ENCODE measurements at regions of chr9 and their contacts with region 1.

Region 1: GRCh38 chr9:129737479-129738274 is 15.2 kb downstream of the PTGES start:
- DNase-seq: peak; percentile 56 to 92 (median 81)
- ATAC-seq: peak; percentile 88 to 91 (median 89)
- H3K4me3 ChIP-seq: peak overlapping the region; percentile 64 to 84
- H3K4me3 Mint-ChIP-seq: peak overlapping the region; percentile 67 to 77 (median 68)
- H3K27ac ChIP-seq: peak overlapping the region; percentile 61
- H3K27ac Mint-ChIP-seq: peak overlapping the region; percentile 39 to 64
- H3K4me1 ChIP-seq: peaks cover 0 to 18% of the 10 kb centered on the region in 2 experiments
- H3K4me1 Mint-ChIP-seq: peaks cover 0 to 7% (median 4%) of the 10 kb centered on the region in 3 donors
- H3K27me3 ChIP-seq: peaks cover 0 to 27% of the 10 kb centered on the region in 2 experiments
- H3K27me3 Mint-ChIP-seq: peaks cover 0 to 2% of the 10 kb centered on the region in 2 donors

Region 2: DNA sequence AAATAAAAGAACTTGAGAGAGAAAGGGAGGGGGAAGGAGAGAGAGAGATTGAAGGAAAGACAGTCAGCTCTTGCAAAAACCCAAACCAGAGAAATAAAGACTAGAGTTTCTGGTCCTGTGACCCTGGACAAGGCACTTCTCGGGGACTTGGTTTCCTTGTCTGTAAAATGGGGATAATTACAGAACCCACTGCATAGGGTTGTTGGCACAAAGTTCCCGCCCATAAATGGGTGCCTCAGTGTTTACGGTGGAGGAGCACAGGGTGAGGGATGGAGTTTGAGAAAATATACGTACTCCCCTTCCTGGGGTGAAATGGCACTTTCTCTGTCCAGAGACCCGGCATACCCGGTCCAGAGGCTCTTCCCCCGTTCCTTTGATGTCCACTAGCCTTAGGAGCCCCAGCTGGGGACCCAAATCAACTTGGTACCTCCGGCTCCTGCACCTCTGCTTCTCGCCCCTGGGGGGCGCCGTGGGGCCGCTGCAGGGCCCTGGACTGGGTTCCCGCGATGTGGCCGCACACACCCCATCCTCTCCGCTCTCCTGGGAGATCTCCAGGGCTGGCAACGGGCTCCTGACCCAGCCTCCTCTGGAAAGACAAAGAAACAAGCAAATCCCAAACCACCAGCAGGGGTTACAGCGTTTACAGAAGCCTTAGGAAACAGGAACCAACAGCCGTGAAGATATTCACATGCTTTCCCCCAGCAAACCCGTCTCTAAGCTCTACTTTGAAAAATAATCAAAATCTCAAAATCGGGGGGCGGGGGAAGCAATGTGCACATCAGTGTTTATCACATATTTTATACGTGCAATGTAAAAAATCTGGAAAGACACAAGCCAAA is 11.1 kb before region 1 on chr9:
- CTCF ChIA-PET with region 1: interaction called, 3 to 10 read pairs
- POLR2A ChIA-PET with region 1: no interaction called
- DNase-seq: peak; percentile 7 to 71 (median 39)
- ATAC-seq: peak; percentile 87 to 91 (median 90)
- H3K4me3 ChIP-seq: no peak overlapping the region
- H3K4me3 Mint-ChIP-seq: peak overlapping the region in 2 of 3 donors; percentile 31 to 41
- H3K27ac ChIP-seq: no peak overlapping the region
- H3K27ac Mint-ChIP-seq: no peak overlapping the region
- H3K4me1 ChIP-seq: peaks cover 0 to 5% of the 10 kb centered on the region in 2 experiments
- H3K4me1 Mint-ChIP-seq: peaks cover 0 to 5% (median 3%) of the 10 kb centered on the region in 3 donors
- H3K27me3 ChIP-seq: peaks cover 0 to 49% of the 10 kb centered on the region in 2 experiments
- H3K27me3 Mint-ChIP-seq: peaks cover 6 to 28% of the 10 kb centered on the region in 2 donors

Region 3: DNA sequence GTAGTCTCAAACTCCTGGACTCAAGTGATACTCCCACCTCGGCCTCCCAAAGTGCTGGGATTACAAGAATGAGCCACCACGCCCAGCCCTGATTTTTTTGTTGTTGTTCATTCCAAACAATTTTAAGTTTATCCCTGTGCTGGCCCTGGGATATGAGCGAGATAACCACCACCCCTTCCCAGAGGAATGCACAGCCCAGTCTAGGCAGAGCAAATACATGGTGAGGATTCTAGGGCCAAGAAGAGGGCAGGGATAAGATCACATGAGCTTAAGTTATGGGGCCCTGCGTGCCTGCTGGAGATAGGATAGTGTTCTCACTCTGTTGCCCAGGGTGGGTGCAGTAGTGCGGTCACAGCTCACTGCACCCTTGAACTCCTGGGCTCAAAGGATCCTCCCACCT is 44.3 kb after region 1 on chr9:
- CTCF ChIA-PET with region 1: interaction called, 6 to 10 read pairs
- POLR2A ChIA-PET with region 1: no interaction called
- DNase-seq: no peak
- ATAC-seq: no peak
- H3K4me3 ChIP-seq: no peak overlapping the region
- H3K4me3 Mint-ChIP-seq: no peak overlapping the region
- H3K27ac ChIP-seq: no peak overlapping the region
- H3K27ac Mint-ChIP-seq: no peak overlapping the region
- H3K4me1 ChIP-seq: peaks cover 0 to 12% of the 10 kb centered on the region in 2 experiments
- H3K4me1 Mint-ChIP-seq: peaks cover 8 to 10% (median 10%) of the 10 kb centered on the region in 3 donors
- H3K27me3 ChIP-seq: peaks cover 0 to 22% of the 10 kb centered on the region in 2 experiments
- H3K27me3 Mint-ChIP-seq: peaks cover 3 to 15% of the 10 kb centered on the region in 2 donors

Region 4: GRCh38 chr9:129796029-129796910 is 58.6 kb after region 1 on chr9:
- CTCF ChIA-PET with region 1: interaction called in 1 of 2 experiments, 10 read pairs
- POLR2A ChIA-PET with region 1: no interaction called
- DNase-seq: no peak
- ATAC-seq: no peak
- H3K4me3 ChIP-seq: no peak overlapping the region
- H3K4me3 Mint-ChIP-seq: no peak overlapping the region
- H3K27ac ChIP-seq: no peak overlapping the region
- H3K27ac Mint-ChIP-seq: no peak overlapping the region
- H3K4me1 ChIP-seq: no peaks in the 10 kb centered on the region
- H3K4me1 Mint-ChIP-seq: no peaks in the 10 kb centered on the region
- H3K27me3 ChIP-seq: peaks cover 0 to 9% of the 10 kb centered on the region in 2 experiments
- H3K27me3 Mint-ChIP-seq: no peaks in the 10 kb centered on the region

Measured in T-cell (primary cell).